ENCODE measurements at regions of chr1 and their contacts with region 1.

Region 1: DNA sequence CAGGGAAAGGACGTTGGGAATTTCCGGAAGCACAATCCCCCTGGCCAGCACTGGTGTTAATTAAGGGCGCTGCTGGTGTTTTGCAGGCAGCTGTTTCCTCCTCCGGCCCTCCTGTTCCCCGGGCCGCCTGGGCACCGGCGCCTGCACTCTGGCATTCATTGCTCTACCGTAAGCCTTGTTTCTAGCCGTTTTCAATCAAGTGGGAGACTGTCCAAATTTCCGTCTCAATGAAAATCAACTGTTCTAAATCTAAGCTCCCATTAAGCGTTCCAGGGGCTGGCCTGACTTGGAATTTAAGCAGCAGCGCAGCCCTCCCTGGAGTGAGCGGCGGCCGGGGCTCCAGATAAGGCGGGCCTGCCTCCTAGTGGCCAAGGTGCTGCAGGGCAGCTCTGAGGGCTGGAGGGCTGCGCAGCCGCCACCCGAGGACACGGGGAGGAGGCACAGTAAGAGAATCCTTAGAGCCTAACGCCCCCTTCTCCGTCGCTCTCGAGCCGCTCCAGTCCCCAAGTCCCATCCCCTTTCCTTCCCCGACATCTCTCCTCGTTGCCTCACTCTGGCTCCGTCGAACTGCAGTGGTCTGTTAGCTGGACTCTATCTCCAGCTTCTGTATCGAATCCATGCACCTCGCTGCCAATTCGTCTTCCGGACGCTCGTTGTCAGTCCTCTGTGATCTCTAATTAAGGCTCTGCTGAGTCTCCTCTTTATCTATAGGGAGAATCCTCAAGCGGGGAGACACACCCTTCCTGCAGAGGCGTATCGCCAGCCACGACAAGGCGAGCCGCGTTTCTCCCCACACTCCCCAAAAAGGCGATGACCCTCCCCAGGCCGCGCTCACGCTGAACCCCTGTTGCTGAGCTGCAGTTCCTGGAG is 57.8 kb upstream of the LRRC8D start:
- DNase-seq: peak; percentile 93
- ATAC-seq: peak; percentile 99

Region 2: DNA sequence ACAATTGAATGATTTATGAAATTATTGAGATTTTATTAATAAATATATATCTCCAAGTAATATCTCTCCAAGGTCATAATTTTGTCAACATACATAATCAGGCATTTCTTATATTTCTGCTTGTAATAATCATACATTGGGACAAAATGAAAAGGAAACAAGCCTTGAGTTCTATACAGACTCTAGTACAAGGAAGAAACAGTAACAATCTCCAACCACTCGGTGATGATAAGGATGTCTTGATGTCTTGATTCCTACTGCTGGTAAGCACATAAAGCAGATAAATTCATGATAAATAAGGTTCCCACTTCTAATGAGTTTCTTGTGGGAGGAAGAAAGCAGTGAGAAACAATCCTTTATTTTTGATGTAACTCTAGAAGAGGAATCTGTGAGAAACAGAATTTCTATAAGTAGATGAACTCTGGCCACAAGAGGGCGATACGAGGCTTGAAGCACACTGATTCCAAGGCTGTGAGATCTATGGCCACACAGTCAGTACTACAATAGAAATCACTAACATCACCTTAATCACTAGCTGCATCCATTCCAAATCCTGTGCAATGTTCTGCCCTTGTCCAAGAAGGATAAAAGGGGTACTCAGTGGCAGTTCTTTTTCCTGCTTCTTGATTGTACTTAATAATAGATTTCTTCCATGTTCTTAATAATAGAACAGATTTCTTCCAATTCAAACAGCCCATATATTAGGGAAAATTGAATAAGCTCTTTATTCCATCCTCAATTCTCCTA is 279.8 kb before region 1 on chr1:
- intact Hi-C with region 1: loop called (anchors 5 kb)
- DNase-seq: peak; percentile 70
- ATAC-seq: peak; percentile 82

Region 3: GRCh38 chr1:89598450-89599331 is 164.3 kb before region 1 on chr1:
- intact Hi-C with region 1: loop called (anchors 2 kb)
- DNase-seq: no peak
- ATAC-seq: peak; percentile 77

Region 4: DNA sequence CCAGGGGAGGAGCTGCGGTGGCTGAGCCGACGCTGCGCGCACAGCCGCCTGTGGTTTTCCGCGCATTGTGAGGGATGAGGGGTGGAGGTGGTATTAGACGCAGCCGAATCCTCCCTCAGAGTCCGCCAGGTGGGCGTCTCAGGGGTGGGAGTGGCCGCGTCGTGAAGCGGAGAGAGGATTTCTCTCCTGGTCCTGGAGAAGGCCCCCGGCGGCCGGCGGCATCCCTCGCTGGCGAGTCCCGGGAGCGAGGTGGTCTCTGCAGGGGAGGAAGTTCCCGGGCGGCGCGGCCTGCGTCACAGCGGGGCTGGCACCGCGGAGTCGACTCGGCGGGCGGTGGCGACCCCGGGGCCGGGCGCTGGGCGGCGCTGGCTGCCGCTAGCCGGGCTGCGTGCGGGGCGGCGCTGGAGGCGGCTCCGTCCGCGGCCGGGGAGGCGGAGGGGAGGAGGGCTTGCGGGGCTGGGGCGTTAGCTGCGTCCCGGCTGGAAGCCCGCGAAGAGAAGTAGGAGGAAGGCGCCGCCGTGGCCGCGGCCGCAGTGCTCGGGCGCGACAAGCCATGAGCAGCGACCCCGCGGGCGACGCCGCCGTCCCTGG is 130.3 kb before region 1 on chr1 and contains the start of gene LRRC8C:
- intact Hi-C with region 1: loop called (anchors 2 kb)
- DNase-seq: peak; percentile 92
- ATAC-seq: peak; percentile 98
- total RNA-seq, gene LRRC8C: 5.9 TPM